ENCODE measurements at regions of chr16 and their contacts with region 1.

Region 1: DNA sequence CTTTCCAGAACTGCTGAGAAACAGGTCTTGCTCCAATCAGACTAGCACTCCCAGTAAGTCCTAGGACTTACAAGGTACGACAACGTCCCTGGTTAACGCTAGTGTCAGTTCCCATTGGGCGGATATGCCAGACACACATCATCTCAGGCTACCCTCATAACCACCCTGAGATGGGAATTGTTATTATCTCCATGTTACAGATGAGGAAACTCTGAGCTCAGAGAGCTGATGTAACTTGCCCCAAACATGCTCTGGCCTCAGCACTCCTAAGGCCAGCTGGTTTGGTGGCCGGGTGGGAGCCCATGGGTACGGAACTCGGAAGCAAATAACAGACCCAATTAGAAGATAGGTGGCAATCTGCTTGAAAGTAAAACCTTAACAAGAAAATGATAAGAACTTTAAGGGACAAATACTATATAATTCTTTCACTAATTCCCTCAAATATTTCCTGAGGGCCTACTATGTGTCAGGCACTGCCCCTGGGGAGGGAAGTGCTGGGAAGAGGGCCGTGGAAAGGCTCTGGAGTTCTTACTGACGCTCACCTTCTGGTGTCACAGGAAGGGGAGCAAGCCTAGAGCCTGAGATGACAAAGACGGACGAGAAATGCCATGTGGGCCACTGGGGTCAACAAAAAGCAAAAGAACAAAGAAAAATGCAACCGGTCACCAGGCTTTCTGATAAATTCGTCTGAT is 6.9 kb downstream of the CREBBP start:
- DNase-seq: no peak
- ATAC-seq: peak; percentile 3 to 56 (median 35)
- H3K4me3 ChIP-seq: no peak overlapping the region
- H3K27ac ChIP-seq: peak overlapping the region in 1 of 12 donors; percentile 52
- H3K4me1 ChIP-seq: peaks cover 14 to 99% (median 92%) of the 10 kb centered on the region in 12 donors
- H3K27me3 ChIP-seq: no peaks in the 10 kb centered on the region
- CTCF ChIP-seq: no peak
- POLR2A ChIP-seq: no peak

Region 2: GRCh38 chr16:3690470-3690928 is 183.1 kb before region 1 on chr16:
- intact Hi-C with region 1: loop called in 3 of 10 experiments (anchors 5 kb)
- DNase-seq: peak; percentile 89 to 94 (median 92)
- ATAC-seq: peak; percentile 86 to 96 (median 94)
- H3K4me3 ChIP-seq: peak overlapping the region in 10 of 12 donors; percentile 27 to 56 (median 43)
- H3K27ac ChIP-seq: peak overlapping the region in 10 of 12 donors; percentile 14 to 72 (median 56)
- H3K4me1 ChIP-seq: peaks cover 0 to 20% (median 15%) of the 10 kb centered on the region in 12 donors
- H3K27me3 ChIP-seq: no peaks in the 10 kb centered on the region
- CTCF ChIP-seq: peak; percentile 90 to 99 (median 95)
- POLR2A ChIP-seq: no peak

Region 3: DNA sequence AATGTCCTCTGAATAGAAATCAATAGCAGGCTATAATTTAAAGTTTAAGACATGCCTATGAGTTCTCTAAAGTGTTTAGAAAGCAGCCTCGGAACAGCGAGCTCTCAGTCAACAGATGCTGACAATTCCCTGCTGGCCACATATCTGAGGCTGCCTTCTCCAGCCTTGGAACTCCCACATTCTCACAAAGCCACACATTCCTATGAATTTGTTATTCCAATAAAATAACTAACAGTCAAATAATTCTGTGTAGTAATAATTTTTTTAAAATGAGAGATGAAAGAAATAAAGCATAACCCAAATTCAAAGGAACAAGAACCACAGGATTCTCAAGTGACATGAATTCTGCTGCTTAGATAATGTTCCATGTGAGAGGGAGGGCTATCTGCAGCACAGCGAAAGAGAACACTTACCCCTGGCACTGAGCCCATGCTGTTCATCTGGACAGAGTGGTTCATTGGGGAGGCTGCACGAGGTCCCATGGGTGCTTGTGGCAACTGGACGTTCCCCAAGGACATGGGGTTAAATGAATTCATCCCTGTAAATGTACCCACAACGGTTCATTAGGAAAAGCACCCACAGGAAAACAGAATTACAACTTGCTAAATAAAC is 99.4 kb before region 1 on chr16:
- intact Hi-C with region 1: loop called in 3 of 10 experiments (anchors 5 to 10 kb)
- DNase-seq: peak; percentile 67 to 88 (median 72)
- ATAC-seq: peak; percentile 85 to 88 (median 87)
- H3K4me3 ChIP-seq: no peak overlapping the region
- H3K27ac ChIP-seq: peak overlapping the region in 11 of 12 donors; percentile 0 to 67 (median 37)
- H3K4me1 ChIP-seq: peaks cover 5 to 45% (median 26%) of the 10 kb centered on the region in 12 donors
- H3K27me3 ChIP-seq: no peaks in the 10 kb centered on the region
- CTCF ChIP-seq: no peak
- POLR2A ChIP-seq: no peak

Region 4: GRCh38 chr16:3793161-3793576 is 80.5 kb before region 1 on chr16:
- intact Hi-C with region 1: loop called in 5 of 10 experiments (anchors 5 to 10 kb)
- DNase-seq: peak in 4 of 5 donors; percentile 57 to 67 (median 60)
- ATAC-seq: peak; percentile 60 to 90 (median 88)
- H3K4me3 ChIP-seq: peak overlapping the region in 3 of 12 donors; percentile 3 to 38 (median 8)
- H3K27ac ChIP-seq: peak overlapping the region; percentile 19 to 72 (median 52)
- H3K4me1 ChIP-seq: peaks cover 0 to 60% (median 44%) of the 10 kb centered on the region in 12 donors
- H3K27me3 ChIP-seq: no peaks in the 10 kb centered on the region
- CTCF ChIP-seq: peak in 9 of 12 donors; percentile 6 to 51 (median 28)
- POLR2A ChIP-seq: peak in 1 of 2 donors; percentile 21

Region 5: GRCh38 chr16:3819746-3820724 is 53.6 kb before region 1 on chr16:
- intact Hi-C with region 1: loop called in 3 of 10 experiments (anchors 5 to 10 kb)
- DNase-seq: peak in 2 of 5 donors; percentile 44 to 66
- ATAC-seq: peak; percentile 80 to 86 (median 84)
- H3K4me3 ChIP-seq: peak overlapping the region in 1 of 12 donors; percentile 8
- H3K27ac ChIP-seq: peak overlapping the region in 4 of 12 donors; percentile 10 to 61 (median 44)
- H3K4me1 ChIP-seq: peaks cover 18 to 97% (median 88%) of the 10 kb centered on the region in 12 donors
- H3K27me3 ChIP-seq: no peaks in the 10 kb centered on the region
- CTCF ChIP-seq: no peak
- POLR2A ChIP-seq: no peak

Measured in heart left ventricle (tissue), 16 donors.